ENCODE measurements at regions of chr3 and their contacts with region 1.

Region 1: DNA sequence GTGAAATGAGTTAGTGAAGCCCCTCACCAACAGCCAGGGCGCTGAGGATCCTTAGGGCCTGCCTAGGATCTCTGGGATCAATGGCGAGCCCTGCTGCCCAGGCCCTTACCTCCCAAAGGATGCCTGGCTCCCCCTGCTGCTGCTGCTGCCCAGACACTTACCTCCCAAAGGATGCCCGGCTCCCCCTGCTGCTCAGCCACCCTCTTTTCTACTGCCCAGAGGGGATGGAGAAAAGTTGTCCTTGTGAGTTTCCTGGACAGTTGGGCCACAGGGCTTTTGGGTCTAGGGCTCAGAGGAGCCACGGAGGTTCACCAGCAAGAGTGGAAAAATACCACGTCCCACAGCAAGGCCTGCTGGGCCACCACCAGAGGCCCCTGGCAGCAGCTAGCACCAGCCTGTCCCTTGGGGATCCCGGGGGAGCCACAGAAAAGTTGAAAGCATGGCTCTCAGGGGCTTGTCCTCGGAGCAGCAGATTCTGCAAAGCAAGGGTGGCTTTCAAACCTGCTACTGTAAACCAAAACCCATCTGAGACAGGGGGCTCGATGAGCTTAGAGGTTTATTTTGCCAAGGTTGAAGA is 59.4 kb downstream of the SLC6A6 start:
- DNase-seq: peak; percentile 80
- H3K4me3 Mint-ChIP-seq: no peak overlapping the region
- H3K27ac Mint-ChIP-seq: peak overlapping the region; percentile 74
- H3K4me1 Mint-ChIP-seq: peaks cover 18% of the 10 kb centered on the region
- H3K27me3 Mint-ChIP-seq: no peaks in the 10 kb centered on the region

Region 2: DNA sequence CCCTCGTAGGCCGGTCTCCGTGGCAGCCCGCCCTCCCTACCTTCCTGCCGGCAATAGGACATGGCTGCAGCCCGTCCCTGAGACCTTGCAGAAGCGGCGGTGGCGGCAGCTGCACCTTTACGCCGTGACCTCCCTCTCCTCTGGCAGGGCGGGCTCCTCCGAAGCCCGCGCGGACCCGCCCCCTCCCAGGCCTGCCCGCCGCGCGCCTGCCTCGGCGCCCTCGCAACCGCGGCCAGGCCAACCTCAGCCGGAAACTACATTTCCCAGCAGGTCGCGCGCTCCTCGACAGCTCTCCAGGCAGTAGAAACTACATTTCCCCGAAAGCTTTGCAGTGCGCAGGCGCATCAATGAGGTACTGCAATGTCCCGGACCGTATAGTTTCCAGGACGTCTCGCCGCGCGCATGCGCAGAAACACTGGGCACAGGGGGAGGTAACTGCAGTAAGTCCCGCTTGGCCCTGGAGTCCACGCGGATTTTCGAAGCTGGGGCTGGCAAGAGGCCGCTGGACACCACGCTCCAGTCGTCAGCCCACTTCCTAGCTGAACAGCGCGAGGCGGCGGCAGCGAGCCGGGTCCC is 337.1 kb before region 1 on chr3 and contains the starts of genes CHCHD4 and TMEM43:
- intact Hi-C with region 1: no loop called
- DNase-seq: peak; percentile 99
- H3K4me3 Mint-ChIP-seq: peak within 1 kb of the TSS; percentile 98
- H3K27ac Mint-ChIP-seq: peak within 1 kb of the TSS; percentile 95
- H3K4me1 Mint-ChIP-seq: peaks cover 54% of the 10 kb centered on the region
- H3K27me3 Mint-ChIP-seq: no peaks in the 10 kb centered on the region
- total RNA-seq, gene CHCHD4: 27.7 and 29.6 TPM in 2 replicates
- total RNA-seq, gene TMEM43: 38.7 and 39.4 TPM in 2 replicates

Region 3: DNA sequence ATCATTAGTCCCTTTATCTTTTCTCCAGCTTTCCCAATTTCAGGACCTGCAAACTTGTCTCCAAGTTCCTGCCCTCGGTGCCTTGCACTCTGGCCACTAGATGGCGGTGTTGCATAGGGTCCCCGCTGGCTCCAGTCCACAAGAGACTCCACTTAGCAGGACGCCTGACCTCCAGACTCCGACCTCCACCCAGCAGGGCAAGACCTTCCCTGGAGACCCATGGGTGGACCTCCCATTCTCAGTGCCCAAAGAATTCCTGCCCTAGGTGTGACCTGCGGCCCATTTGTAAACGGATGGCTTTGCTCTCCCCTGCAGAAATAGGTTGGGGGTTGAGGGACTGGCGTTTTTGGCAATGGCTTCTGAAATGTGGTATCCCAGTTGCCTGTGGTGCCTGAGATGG is 200.6 kb before region 1 on chr3:
- intact Hi-C with region 1: loop called (anchors 1 kb)
- DNase-seq: peak; percentile 92
- H3K4me3 Mint-ChIP-seq: no peak overlapping the region
- H3K27ac Mint-ChIP-seq: no peak overlapping the region
- H3K4me1 Mint-ChIP-seq: no peaks in the 10 kb centered on the region
- H3K27me3 Mint-ChIP-seq: peaks cover 7% of the 10 kb centered on the region

Region 4: DNA sequence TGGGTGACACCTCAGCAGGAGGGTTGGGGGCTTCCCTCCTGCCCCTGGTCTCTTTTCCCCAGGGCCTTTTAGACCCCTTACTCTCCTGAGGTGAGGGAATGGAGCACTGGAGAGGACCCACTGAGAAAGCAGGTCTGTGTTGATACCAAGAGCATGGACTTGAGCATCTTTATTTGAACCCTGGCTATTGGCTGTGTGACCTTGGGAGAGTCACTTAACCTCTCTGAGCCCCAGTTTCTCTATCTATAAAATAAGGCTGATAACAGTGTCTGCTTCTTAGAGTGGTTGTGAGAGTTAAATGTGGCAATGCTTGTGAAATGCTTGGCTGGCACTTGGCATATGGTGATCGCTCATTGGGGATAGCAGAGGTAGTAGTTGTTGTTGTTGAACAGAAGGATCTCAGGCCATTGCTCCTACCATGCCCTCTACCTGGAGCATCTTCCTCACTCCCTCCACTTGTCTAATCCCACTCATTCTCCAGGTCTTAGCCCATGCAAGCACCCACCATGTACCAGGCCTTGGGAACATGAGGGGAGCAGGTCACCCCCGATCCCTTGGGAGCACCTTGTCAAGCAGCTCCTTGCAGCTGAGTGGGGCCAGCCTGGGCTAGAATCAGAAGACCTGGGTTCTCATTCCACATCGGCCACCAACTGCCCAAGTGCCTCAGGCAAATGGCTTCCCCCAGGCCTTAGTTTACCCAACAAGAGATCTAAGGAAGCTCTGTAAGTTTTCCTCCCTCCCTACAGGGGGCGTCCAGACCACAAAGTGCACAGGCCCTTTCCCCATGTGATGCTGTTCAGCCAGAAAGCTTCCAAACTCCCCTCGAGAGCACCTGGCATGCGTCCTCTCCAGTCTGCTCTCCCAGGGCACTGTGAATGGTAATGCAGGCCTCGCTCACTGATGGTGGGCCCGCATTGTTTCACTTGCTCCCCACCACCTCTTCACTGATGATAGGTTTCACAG is 186.6 kb before region 1 on chr3:
- intact Hi-C with region 1: loop called (anchors 5 kb)
- DNase-seq: no peak
- H3K4me3 Mint-ChIP-seq: no peak overlapping the region
- H3K27ac Mint-ChIP-seq: no peak overlapping the region
- H3K4me1 Mint-ChIP-seq: no peaks in the 10 kb centered on the region
- H3K27me3 Mint-ChIP-seq: peaks cover 3% of the 10 kb centered on the region

Region 5: DNA sequence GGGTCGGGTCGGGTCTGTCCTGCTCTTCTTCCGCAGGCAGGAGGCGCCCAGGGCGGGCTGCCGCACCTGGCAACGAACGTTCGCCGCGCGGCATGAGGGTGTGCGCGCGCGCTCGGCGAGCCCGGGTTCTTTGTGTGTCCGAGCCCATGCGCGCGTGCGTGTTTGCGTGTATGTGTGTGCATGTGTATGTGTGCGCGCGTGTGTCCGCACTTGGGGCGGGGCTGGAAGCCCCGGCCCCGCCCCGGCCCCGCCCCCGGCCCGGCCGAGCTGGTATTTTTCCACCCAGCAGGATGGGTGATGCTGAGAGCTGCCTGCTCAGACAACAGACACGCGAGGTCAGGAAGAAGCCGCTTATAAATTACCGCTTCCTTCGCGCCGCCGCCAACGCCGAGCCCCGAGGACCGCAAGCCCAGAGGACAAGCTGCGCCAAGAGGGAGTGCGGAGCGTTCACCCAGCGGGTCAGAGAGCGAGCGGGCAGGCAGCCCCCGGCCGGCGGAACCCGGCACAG is 59.5 kb before region 1 on chr3 and contains the start of gene SLC6A6:
- intact Hi-C with region 1: loop called (anchors 1 kb)
- DNase-seq: peak; percentile 98
- H3K4me3 Mint-ChIP-seq: peak within 1 kb of the TSS; percentile 99
- H3K27ac Mint-ChIP-seq: peak within 1 kb of the TSS; percentile 97
- H3K4me1 Mint-ChIP-seq: peaks cover 43% of the 10 kb centered on the region
- H3K27me3 Mint-ChIP-seq: no peaks in the 10 kb centered on the region
- total RNA-seq, gene SLC6A6: 53.9 and 63.7 TPM in 2 replicates

Region 6: GRCh38 chr3:14426063-14426620 is 35.7 kb before region 1 on chr3:
- intact Hi-C with region 1: loop called (anchors 1 kb)
- DNase-seq: peak; percentile 83
- H3K4me3 Mint-ChIP-seq: peak overlapping the region; percentile 67
- H3K27ac Mint-ChIP-seq: peak overlapping the region; percentile 65
- H3K4me1 Mint-ChIP-seq: peaks cover 80% of the 10 kb centered on the region
- H3K27me3 Mint-ChIP-seq: no peaks in the 10 kb centered on the region

Region 7: DNA sequence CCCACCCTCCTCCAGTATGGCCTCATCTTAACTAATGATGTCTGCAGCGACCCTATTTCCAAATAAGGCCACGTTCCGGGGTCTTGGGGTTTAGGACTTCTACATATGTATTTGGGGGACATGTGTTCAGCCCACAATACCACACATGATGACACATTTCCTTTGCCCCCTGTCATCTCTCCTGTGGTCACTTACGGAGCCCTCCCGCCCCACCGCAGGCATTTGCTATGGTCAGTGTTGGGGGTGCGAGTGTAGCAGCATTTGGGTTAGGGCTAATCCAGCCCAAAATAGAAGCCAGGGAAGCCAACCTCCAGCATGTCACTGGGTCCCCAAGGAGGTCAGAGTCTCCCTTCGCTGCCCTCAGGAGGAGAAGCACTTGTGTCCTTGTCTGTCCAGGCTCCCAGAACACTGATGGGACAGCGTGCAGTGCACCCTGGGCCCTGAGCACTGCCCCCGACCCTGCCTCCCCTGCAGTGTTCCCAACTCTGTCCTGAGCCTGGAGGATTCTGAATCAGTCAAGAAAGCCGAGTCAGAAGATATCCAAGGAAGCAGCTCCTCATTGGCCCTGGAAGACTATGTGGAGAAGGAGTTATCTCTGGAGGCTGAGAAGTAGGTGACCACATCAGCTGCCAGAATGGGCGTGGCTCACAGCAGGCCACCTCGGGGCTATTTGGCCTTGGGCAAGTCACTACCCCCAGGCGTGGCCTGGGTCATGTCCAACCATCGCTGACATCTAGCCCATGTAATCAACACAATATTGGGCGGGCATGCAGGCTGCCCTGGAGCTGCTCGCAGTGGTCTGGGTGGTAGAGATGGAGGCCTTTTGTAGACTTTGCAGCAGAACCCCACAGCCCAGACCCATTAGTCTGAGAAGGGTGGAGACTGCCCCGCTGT is 310.0 kb after region 1 on chr3:
- intact Hi-C with region 1: no loop called
- DNase-seq: no peak
- H3K4me3 Mint-ChIP-seq: no peak overlapping the region
- H3K27ac Mint-ChIP-seq: no peak overlapping the region
- H3K4me1 Mint-ChIP-seq: no peaks in the 10 kb centered on the region
- H3K27me3 Mint-ChIP-seq: no peaks in the 10 kb centered on the region